K562 (cell line): ENCODE measurements at regions of chr11 and their contacts with region 1.

Region 1: GRCh38 chr11:118290923-118291322 is 13.6 kb upstream of the CD3E start:
- DNase-seq: peak in 1 of 4 experiments; percentile 30
- ATAC-seq: peak; percentile 68
- H3K4me3 ChIP-seq: no peak overlapping the region
- H3K27ac ChIP-seq: no peak overlapping the region
- H3K4me1 ChIP-seq: no peaks in the 10 kb centered on the region; a peak in 1 of 5 replicates
- H3K27me3 ChIP-seq: peaks cover 0 to 8% of the 10 kb centered on the region in 2 experiments; a peak in 2 of 5 replicates
- CTCF ChIP-seq: peak; percentile 41 to 65 (median 46); a peak in 4 of 6 replicates
- EP300 ChIP-seq: no peak
- POLR2A ChIP-seq: no peak
- RAD21 ChIP-seq: peak; percentile 91 to 92

Region 2: DNA sequence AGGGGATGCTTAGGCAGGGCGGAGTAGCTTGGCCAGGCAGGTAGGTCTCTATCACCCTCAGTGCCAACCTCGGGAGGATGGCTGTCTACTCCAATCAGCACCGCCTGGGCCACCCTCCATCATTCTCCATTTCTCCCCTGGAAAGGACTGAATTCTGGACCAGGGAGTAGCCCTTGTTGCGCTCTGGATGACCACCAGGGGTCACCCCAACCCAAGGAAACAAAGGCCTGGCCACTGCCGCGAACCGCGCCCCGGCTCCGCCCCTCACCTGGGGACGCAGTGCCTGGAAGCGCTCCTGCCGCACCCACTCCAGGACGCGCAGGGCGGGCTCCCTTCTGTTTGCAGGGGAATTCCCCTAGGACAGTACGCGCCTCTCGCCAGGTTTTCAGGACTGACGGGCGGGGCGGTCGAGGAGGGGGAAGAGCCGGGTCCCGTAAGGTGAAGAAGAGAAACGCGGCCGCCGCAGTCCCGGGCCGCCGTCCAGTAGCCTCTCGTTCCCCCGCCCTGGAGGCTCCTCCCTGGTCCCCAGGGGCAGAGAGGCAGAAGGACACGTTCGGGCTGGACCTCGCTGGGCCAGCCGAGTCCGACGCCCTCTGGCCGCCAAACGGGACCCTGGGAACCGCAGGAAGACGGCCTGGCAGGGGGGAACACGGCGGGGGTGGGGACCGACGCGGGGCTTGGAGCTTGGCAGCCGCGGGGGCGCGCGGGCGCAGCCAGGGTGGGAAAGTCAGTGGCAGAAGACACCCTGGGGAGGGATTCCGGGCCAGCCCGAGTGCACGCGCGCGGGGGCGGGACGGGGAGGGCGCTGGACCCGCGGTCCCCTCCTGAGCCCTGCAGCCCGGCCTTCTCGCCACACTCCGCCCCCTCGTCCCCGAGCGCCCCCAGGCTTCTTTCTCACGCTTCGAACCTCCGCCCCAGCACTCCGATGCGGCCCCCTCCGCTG is 145.4 kb before region 1 on chr11:
- CTCF ChIA-PET with region 1: no interaction called
- POLR2A ChIA-PET with region 1: no interaction called
- in situ Hi-C with region 1: no loop called
- intact Hi-C with region 1: loop called (anchors 1 kb)
- DNase-seq: peak; percentile 87 to 96 (median 94)
- ATAC-seq: peak; percentile 97
- H3K4me3 ChIP-seq: peak overlapping the region; percentile 46
- H3K27ac ChIP-seq: no peak overlapping the region
- H3K4me1 ChIP-seq: peaks cover 0 to 11% of the 10 kb centered on the region in 2 experiments; a peak in 3 of 5 replicates
- H3K27me3 ChIP-seq: peaks cover 7 to 62% of the 10 kb centered on the region in 2 experiments; a peak in 4 of 5 replicates
- CTCF ChIP-seq: peak; percentile 86 to 93 (median 92)
- EP300 ChIP-seq: no peak
- POLR2A ChIP-seq: no peak
- RAD21 ChIP-seq: peak; percentile 94 to 96

Region 3: DNA sequence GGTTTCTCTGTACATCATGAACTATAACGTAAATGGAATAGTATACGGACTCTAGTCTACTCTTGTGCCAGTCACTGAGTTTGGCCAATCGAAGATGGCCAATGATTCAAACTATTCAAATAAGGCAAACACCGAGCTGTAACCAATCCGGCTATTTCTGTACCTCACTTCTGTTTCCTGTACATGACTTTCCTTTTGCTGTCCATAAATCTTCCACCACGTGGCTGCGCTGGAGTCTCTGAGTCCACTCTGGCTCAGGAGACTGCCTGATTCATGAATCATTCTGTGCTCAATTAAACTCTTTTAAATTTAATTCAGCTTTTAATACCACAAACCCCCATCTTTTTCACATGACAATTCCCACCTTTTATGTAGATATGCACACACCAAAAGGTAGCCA is 64.6 kb before region 1 on chr11:
- CTCF ChIA-PET with region 1: interaction called, 5 read pairs
- POLR2A ChIA-PET with region 1: no interaction called
- in situ Hi-C with region 1: no loop called
- intact Hi-C with region 1: loop called (anchors 1 kb)
- DNase-seq: peak in 1 of 4 experiments; percentile 34
- ATAC-seq: peak; percentile 33; the same call in 1 of the 3 replicates
- H3K4me3 ChIP-seq: no peak overlapping the region
- H3K27ac ChIP-seq: no peak overlapping the region
- H3K4me1 ChIP-seq: no peaks in the 10 kb centered on the region
- H3K27me3 ChIP-seq: peaks cover 2 to 11% of the 10 kb centered on the region in 2 experiments; a peak in 3 of 5 replicates
- CTCF ChIP-seq: peak in 2 of 3 experiments; percentile 11 to 54; a peak in 2 of 6 replicates
- EP300 ChIP-seq: no peak
- POLR2A ChIP-seq: no peak
- RAD21 ChIP-seq: peak; percentile 62 to 67